HEK293 (cell line): ENCODE measurements at regions of chr1 and their contacts with region 1.

Region 1: GRCh38 chr1:2545759-2546514 is 10.2 kb upstream of the TNFRSF14 start:
- H3K4me3 ChIP-seq: peak overlapping the region; percentile 41
- H3K27ac ChIP-seq: peak overlapping the region; percentile 73; the same call in 1 of the 2 replicates
- H3K4me1 ChIP-seq: peaks cover 6% of the 10 kb centered on the region
- CTCF ChIP-seq: no peak

Region 2: GRCh38 chr1:2259668-2260402 is 286.1 kb before region 1 on chr1:
- CTCF ChIA-PET with region 1: no interaction called
- POLR2A ChIA-PET with region 1: no interaction called
- H3K4me3 ChIP-seq: no peak overlapping the region
- H3K27ac ChIP-seq: no peak overlapping the region
- H3K4me1 ChIP-seq: peaks cover 13% of the 10 kb centered on the region
- CTCF ChIP-seq: no peak

Region 3: GRCh38 chr1:2414083-2414958 is 131.6 kb before region 1 on chr1:
- CTCF ChIA-PET with region 1: interaction called, 31 read pairs
- POLR2A ChIA-PET with region 1: interaction called, 6 read pairs
- H3K4me3 ChIP-seq: no peak overlapping the region
- H3K27ac ChIP-seq: no peak overlapping the region
- H3K4me1 ChIP-seq: no peaks in the 10 kb centered on the region
- CTCF ChIP-seq: peak; percentile 88

Region 4: GRCh38 chr1:2561898-2562545 is 16.1 kb after region 1 on chr1:
- CTCF ChIA-PET with region 1: interaction called, 12 read pairs
- POLR2A ChIA-PET with region 1: interaction called, 5 read pairs
- H3K4me3 ChIP-seq: no peak overlapping the region
- H3K27ac ChIP-seq: no peak overlapping the region
- H3K4me1 ChIP-seq: no peaks in the 10 kb centered on the region
- CTCF ChIP-seq: peak; percentile 40; the same call in 1 of the 2 replicates